Activated T-helper 1 cell treated with anti-CD3 and anti-CD28 coated beads, Interleukin-12 subunit alpha, Interleukin-12 subunit beta, Interleukin-2, Interleukin-4 antibody, amounts not matched to agents 30 ng/mL and 10 ng/mL and 1 ng/mL, durations not matched to agents 14 hours and 24 hours and 36 hours (primary cell): ENCODE measurements at regions of chr2 and their contacts with region 1.

Region 1: GRCh38 chr2:227415538-227416424 is 28.0 kb upstream of the SCYGR1 start:
- DNase-seq: no peak
- H3K4me3 Mint-ChIP-seq: peak overlapping the region; percentile 37
- H3K27ac Mint-ChIP-seq: peak overlapping the region; percentile 63
- H3K4me1 Mint-ChIP-seq: peaks cover 63% of the 10 kb centered on the region
- H3K27me3 Mint-ChIP-seq: no peaks in the 10 kb centered on the region

Region 2: DNA sequence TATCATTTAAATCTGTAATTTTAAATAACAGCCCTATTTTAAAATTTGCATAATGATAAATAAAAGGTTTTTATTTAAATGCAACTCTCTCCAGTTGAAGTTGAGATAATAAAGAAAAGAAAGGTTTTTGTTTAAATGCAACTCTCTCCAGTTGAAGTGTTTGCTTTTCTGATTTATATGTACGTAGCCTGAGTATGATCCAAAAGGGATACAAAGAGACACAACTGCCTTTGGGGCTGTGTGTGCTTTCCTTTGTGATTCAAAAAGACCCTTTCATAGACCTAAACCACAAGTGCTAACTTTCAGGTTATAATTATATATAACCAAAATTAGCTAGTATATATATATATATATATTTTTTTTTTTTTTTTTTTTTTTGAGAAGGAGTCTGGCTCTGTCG is 166.9 kb before region 1 on chr2:
- intact Hi-C with region 1: no loop called
- DNase-seq: no peak
- H3K4me3 Mint-ChIP-seq: no peak overlapping the region
- H3K27ac Mint-ChIP-seq: no peak overlapping the region
- H3K4me1 Mint-ChIP-seq: no peaks in the 10 kb centered on the region
- H3K27me3 Mint-ChIP-seq: peaks cover 2% of the 10 kb centered on the region

Region 3: DNA sequence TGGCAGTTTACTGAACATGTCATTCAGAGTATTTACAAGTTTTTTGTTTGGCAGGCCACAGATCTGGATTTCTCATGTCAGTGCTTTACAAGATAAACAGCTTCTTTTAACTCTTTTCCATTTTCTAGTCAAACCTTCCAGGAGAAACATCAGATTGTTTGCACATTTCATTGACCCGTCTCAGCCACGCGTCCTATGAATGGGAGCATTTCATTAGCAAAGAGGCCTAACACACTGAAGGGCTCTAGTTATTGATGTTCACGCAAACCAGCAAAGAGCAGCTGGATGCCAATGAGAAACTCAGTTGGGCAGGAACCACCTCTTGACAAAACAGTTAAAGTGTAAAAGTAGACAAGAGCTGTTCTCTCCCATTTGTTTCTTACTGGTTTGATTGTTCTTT is 120.0 kb before region 1 on chr2:
- intact Hi-C with region 1: no loop called
- DNase-seq: no peak
- H3K4me3 Mint-ChIP-seq: no peak overlapping the region
- H3K27ac Mint-ChIP-seq: no peak overlapping the region
- H3K4me1 Mint-ChIP-seq: peaks cover 4% of the 10 kb centered on the region
- H3K27me3 Mint-ChIP-seq: no peaks in the 10 kb centered on the region

Region 4: DNA sequence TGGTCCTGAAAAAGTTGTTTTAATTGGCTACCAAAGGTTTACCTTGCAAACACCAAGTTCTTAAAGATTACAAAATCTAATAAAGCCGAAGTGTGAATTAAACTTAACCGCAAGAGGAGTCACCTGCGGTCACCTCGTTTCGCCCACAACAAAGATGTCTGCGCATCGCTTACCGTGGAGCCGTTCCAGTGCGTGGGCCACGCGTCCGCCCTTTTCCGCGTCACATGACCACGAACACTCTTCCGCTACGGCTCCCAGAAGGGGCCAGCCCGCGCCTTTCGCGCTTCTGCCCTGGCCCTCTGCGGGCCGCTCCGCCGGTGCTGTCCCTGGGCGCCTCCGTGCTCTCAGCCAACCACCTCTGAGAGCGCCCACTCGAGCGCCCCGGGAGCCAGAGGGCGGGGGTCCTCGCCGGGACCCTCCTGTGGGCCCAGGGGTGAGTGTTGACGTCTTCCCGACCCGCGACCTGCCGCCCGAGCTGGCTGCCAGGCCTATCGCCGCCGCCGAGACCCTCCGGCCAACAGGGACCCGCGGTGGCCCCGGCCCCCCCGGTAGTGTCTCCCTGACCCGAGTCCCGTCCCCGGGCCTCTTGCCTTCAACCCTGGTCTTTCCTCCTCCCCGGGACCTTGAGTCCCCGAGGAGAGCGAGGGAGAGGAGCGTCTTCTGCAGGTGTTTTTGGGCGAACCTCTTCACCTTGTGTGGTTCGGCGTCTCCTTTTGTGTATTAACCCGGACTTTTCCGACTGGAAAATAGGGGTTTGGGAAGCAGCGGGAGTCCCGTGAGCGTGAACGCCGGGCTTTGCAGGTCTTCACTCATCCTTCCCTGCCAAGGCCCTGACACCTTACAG is 90.6 kb before region 1 on chr2 and contains the start of gene MFF:
- intact Hi-C with region 1: loop called (anchors 1 kb)
- DNase-seq: peak; percentile 91
- H3K4me3 Mint-ChIP-seq: peak within 1 kb of the TSS; percentile 94
- H3K27ac Mint-ChIP-seq: peak within 1 kb of the TSS; percentile 94
- H3K4me1 Mint-ChIP-seq: peaks cover 42% of the 10 kb centered on the region
- H3K27me3 Mint-ChIP-seq: peaks cover 14% of the 10 kb centered on the region
- total RNA-seq, gene MFF: 69.9 and 74.9 TPM in 2 replicates

Region 5: DNA sequence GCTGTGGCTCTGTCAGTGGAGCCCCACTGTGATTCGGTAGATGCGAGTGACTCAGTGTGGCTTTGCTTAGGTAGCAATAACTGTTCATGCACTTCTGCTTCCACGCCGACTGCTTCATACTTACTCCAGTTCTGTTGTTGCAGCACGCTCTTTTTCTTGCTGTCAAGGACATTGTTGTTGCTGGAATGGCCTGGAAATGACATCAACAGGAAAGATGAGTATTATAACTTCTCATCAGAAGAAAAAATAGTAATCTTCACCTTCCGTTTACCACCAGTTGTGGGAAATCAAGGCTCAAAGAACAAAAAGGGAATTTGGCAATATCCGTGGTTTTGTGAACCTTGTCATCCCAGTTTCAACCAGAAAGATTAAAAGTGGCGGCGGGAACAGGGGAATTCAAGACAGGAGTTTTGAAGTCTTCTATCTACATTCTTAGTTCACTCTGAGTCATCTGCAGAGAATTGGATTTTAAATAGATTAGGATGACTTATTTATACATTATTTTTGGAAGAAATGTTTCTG is 44.9 kb before region 1 on chr2:
- intact Hi-C with region 1: loop called (anchors 1 kb)
- DNase-seq: no peak
- H3K4me3 Mint-ChIP-seq: no peak overlapping the region
- H3K27ac Mint-ChIP-seq: no peak overlapping the region
- H3K4me1 Mint-ChIP-seq: peaks cover 12% of the 10 kb centered on the region
- H3K27me3 Mint-ChIP-seq: peaks cover 2% of the 10 kb centered on the region

Region 6: GRCh38 chr2:227471924-227472264 is 56.1 kb after region 1 on chr2 and contains the start of gene AGFG1:
- intact Hi-C with region 1: loop called (anchors 1 kb)
- DNase-seq: peak; percentile 78
- H3K4me3 Mint-ChIP-seq: peak within 1 kb of the TSS; percentile 88
- H3K27ac Mint-ChIP-seq: peak within 1 kb of the TSS; percentile 86
- H3K4me1 Mint-ChIP-seq: peaks cover 56% of the 10 kb centered on the region
- H3K27me3 Mint-ChIP-seq: no peaks in the 10 kb centered on the region
- total RNA-seq, gene AGFG1: 239 and 252 TPM in 2 replicates

Region 7: DNA sequence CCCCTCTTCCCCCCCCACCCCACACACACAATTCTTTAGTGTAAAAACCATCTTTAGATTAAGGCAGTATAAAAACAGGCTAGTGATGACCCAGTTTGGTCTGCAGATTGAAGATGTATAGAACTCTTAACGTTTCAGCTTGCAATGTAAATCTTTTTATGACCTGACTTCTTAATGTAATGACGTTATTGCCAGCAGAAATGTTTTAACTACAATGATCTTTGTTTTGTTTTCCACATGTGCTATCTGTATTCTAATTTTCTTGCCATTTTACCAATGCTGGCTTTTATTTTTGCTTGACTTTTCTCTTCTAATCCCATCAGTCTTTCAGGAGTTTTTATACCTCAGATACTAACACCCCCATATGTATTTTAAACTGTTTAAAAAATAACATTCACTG is 81.4 kb after region 1 on chr2:
- intact Hi-C with region 1: no loop called
- DNase-seq: no peak
- H3K4me3 Mint-ChIP-seq: no peak overlapping the region
- H3K27ac Mint-ChIP-seq: no peak overlapping the region
- H3K4me1 Mint-ChIP-seq: peaks cover 33% of the 10 kb centered on the region
- H3K27me3 Mint-ChIP-seq: no peaks in the 10 kb centered on the region

Region 8: DNA sequence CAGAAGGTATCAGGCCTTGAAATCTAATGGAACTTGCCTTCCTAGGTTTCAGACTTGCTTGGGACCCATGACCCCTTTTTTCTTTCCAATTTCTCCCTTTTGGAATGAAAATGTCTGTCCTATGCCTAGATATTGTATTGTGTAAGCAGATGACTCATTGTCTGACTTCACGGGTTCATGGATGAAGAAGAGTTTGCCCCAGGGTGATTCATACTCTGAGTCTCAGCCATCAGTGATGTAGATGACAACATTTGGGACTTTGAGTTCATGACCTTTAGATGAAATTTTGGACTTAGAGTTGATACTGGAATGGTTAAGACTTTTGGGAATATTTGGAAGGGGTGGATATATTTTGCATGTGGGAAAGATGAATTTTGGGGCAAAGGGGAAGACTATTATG is 239.7 kb after region 1 on chr2:
- intact Hi-C with region 1: loop called (anchors 10 kb)
- DNase-seq: no peak
- H3K4me3 Mint-ChIP-seq: no peak overlapping the region
- H3K27ac Mint-ChIP-seq: no peak overlapping the region
- H3K4me1 Mint-ChIP-seq: no peaks in the 10 kb centered on the region
- H3K27me3 Mint-ChIP-seq: peaks cover 3% of the 10 kb centered on the region